Head of caudate nucleus (tissue), 42 donors: ENCODE measurements at regions of chr3 and their contacts with region 1.

Region 1: DNA sequence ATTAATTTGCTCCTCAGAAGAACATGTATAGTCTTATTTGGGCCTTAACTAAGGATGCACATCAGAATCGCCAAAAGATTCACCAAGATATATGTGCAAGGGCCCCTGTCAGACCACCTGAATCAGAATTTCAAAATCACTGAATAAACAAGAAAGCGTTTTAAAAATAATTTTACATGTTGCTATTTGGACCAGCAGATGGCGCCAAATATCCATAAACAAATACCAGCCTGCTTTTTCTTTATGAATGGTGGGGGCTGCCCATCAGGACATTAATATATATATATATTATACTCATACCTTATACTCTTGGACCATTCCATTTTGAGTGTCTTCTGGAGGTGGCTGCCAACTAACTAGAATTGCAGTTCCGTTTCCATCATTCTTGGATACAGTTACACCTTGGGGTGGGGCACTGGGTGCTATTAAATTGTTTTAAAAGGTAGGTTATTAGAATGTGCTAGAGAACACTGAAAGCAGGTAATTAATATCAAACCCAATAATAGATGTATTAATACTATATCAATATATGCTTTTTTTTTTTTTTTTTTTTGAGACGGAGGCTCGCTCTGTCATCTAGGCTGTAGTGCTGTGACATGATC is 1108.3 kb downstream of the ROBO1 start:
- DNase-seq: peak in 27 of 42 donors; percentile 14 to 84 (median 47)

Region 2: DNA sequence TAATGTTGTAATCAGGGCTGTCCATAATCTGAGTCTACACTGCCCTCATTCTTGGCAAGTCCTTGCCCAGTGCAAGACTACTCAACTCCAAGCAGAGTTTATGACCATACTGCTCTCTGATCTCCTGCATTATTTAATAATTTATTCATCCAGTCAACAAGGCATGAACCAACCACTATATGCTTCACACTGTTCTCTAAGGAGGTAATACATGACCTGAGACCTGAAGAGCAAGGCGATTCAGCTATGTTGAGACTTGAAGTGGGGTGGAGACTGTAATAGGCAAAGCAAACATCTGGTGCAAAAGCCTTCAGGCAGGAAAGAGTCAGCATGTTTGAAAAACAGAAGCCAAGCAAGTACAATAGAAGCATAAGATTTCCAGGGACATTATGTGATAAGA is 256.8 kb before region 1 on chr3:
- intact Hi-C with region 1: no loop called
- DNase-seq: no peak

Region 3: GRCh38 chr3:78978037-78978436 is 318.6 kb after region 1 on chr3:
- intact Hi-C with region 1: loop called (anchors 5 kb)
- DNase-seq: no peak

Region 4: DNA sequence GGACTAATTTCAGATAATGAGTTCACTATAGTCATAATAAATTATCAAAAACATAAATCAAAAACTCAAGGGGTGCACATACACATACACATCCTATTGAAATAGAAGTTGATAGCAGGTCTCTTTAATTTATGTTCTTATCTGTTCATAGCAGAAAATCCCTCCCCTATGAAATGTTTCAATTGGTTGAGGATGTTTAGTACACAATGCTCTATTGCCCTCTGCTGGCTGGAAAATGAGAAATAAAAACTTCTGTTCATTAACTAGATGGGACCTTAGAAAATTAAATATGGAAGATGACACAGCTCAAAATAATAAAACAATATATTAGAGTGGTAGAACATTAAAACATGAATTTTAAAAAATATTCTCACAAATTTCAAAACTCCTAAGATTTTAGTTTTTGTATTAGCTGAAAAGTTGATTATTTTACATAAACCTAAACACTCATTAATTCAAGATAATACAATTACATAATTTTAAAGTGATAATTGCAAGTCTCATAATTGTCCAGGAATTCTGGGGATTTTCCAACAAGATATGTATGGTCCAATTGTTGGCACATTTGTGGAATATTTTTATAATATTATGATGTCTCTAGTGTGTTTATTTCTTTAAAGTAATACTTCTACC is 373.3 kb after region 1 on chr3:
- intact Hi-C with region 1: loop called (anchors 5 kb)
- DNase-seq: peak in 9 of 42 donors; percentile 7 to 76 (median 38)